ENCODE measurements at regions of chr22 and their contacts with region 1.

Region 1: DNA sequence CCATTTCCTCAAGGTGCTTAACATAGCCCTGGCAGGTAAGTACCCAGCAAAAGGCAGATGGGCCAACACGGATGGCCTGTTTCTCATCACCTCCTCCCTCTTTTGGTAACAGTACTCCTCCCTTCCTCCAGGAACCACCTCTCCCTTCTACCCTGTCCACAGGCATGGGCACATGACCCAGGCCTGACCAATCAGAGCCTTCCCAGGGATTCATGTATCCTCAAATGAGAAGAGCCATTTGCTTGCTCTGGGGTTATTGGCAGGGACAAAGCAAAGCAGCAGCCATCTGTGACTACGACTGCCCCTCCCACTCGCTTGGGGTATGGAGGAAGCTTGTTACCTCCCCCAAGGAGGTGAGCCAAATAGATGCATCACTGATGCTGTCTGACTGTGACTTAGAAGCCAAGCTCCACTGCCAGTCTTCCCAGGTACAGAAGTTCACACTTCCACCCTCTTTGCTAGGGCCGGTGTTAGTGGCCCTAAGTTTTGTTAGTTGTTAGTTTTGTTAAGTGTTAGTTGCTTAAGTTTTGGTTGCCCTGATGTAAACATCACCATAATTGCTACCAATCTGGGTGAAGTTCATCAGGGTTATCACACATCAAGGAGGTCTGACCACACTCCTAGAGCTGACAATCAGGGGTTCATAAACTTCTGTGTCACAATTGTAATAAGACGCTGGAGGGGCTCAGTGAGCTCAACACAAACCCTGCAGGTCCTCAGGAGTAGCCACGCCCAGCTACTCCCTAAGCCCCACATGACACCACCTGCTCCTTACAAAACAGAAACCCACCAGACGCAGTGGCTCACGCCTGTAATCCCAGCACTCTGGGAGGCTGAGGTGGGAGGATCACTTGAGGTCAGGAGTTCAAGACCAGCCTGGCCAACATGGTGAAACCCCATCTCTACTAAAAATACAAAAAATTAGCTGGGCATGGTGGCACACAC is 57.3 kb downstream of the ARFGAP3 start:
- DNase-seq: no peak
- H3K4me3 ChIP-seq: no peak overlapping the region
- H3K27ac ChIP-seq: no peak overlapping the region
- H3K4me1 ChIP-seq: peaks cover 0 to 2% (median 0%) of the 10 kb centered on the region in 4 experiments; a peak in 2 of 7 replicates
- H3K27me3 ChIP-seq: no peaks in the 10 kb centered on the region; a peak in 1 of 7 replicates
- CTCF ChIP-seq: no peak
- EP300 ChIP-seq: no peak
- POLR2A ChIP-seq: no peak
- RAD21 ChIP-seq: no peak

Region 2: DNA sequence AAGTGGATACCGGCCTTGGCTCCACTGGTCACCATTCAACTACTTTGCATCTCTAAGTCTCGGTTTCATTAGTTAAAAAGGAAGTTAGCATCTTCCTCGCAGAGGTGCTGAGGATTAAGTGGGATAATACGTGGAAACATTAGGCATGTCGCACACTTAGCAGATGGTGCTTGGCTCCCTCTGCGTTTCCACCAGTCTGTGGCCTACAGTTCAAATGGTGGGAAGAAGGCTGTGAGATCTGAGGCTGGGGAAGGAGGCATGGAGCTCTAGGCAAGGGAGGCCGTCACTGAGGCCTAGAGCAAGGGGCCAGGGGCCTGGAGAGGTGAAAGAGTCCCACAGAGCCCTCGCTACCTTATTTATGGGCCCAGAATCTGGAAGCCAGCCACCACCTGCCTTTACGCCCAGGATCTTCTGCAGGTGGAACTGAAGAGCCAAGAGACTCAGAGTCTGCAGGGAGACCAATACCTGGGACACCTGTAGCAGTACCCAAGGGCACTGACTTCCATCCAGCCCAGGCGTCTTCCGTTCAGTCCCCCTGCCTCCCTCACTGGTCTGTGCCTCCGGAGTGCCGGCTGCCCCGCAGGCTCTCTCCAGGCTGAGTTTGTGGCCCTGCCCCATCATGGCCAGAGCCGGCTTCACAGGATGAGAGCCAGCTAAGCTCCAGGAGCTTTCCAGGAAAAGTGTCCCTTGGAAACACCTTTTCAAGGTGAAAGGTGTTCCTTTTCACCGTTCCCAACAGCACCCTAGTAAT is 13.0 kb before region 1 on chr22:
- CTCF ChIA-PET with region 1: interaction called, 13 read pairs
- POLR2A ChIA-PET with region 1: no interaction called
- DNase-seq: no peak
- H3K4me3 ChIP-seq: no peak overlapping the region
- H3K27ac ChIP-seq: no peak overlapping the region
- H3K4me1 ChIP-seq: no peaks in the 10 kb centered on the region; a peak in 1 of 7 replicates
- H3K27me3 ChIP-seq: no peaks in the 10 kb centered on the region
- CTCF ChIP-seq: no peak
- EP300 ChIP-seq: no peak
- POLR2A ChIP-seq: no peak
- RAD21 ChIP-seq: no peak

Measured in H1 (cell line).